GM12878 (cell line): ENCODE measurements at regions of chr17 and their contacts with region 1.

Region 1: GRCh38 chr17:7515911-7516610 is 31.9 kb downstream of the POLR2A start:
- DNase-seq: no peak
- ATAC-seq: no peak
- H3K4me3 ChIP-seq: no peak overlapping the region
- H3K27ac ChIP-seq: no peak overlapping the region
- H3K4me1 ChIP-seq: no peaks in the 10 kb centered on the region
- H3K27me3 ChIP-seq: no peaks in the 10 kb centered on the region
- CTCF ChIP-seq: no peak
- EP300 ChIP-seq: no peak
- POLR2A ChIP-seq: no peak
- RAD21 ChIP-seq: no peak

Region 2: DNA sequence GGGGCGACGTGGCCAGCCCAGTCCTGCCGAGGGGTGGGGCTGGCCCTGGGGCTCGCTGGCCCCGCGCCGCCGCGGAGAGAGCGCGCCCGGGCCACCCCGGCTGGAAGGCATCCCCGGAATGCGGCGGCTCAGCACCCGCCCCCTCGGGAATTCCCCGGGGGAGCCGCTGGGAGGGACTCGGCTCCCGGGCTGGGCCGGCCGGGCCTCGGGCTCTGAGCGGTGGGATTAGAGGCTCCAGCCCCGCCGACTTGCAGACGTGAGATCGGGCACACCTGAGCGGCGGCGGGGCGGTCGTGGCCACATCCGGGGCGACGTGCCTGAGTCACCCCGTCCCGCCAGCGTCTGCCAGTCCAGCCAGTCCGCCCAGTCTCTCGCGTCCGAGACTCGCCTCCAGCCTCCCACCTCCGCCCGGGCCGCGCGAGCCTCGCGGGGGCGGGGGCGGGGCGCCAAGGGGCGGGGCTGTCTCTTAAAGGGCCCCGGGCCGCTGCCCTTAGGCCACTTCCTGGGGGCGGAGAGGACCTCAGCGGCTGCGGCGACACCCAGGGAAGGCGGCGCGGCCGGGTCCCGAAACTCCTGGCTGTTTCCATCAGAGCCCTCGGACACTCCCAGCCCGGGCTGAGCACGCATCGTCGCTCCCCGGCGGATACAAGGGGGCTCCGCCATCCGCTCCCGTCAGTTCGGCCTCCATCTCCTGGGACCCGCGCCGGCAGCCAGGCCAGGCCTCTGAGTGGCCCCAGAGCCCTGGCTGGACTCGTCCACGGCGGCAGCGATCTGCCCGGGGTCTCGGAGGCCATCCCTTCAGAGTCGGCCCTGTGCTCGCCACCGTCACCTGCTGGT is 164.2 kb before region 1 on chr17 and contains the start of gene KCTD11:
- CTCF ChIA-PET with region 1: interaction called, 28 read pairs
- POLR2A ChIA-PET with region 1: no interaction called
- RAD21 ChIA-PET with region 1: interaction called, 4 read pairs
- SMC1A ChIA-PET with region 1: interaction called, 9 read pairs
- in situ Hi-C with region 1: no loop called
- intact Hi-C with region 1: no loop called
- DNase-seq: no peak
- ATAC-seq: peak; percentile 81
- H3K4me3 ChIP-seq: peak within 1 kb of the TSS; percentile 88
- H3K27ac ChIP-seq: peak within 1 kb of the TSS; percentile 59
- H3K4me1 ChIP-seq: peaks cover 23% of the 10 kb centered on the region
- H3K27me3 ChIP-seq: no peaks in the 10 kb centered on the region
- CTCF ChIP-seq: peak in 2 of 3 experiments; percentile 55 to 59; a peak in 3 of 6 replicates
- EP300 ChIP-seq: no peak
- POLR2A ChIP-seq: peak; percentile 81
- RAD21 ChIP-seq: 0 out of 2 replicates have a peak, but pooled peaks have one; percentile 27
- polyA plus RNA-seq, gene KCTD11: 0.05 to 0.09 TPM

Region 3: DNA sequence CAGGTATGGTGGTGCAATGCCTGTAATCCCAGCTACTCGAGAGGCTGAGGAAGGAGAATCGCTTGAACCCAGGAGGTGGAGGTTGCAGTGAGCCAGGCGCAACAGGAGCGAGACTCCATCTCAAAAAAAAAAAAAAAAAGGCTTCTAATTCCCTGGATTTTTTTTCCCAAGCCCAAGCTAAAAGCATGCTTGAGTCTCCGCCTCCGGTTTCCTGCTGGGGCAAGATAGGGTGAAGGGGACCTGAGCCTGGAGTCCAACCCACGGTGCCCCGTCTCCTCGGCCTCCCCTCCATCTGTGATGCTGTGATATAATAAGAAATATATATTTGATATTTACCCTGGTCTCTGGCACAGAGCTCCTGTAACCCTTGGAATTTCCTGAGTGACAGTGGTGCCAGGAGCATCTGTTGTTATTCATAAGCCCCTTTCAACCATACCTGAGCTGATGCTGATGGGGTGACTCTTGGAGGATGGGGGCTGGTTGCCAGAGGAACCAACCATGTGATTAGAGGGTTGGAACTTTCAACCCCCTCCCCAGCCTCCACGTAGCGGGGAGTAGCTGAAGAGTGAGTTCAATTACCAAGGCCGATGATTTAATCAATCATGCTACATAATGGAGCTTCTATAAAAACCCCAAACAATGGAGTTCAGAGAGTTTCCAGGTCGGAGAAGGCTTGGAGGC is 148.0 kb before region 1 on chr17:
- CTCF ChIA-PET with region 1: no interaction called
- POLR2A ChIA-PET with region 1: no interaction called
- RAD21 ChIA-PET with region 1: no interaction called
- SMC1A ChIA-PET with region 1: no interaction called
- in situ Hi-C with region 1: no loop called
- intact Hi-C with region 1: no loop called
- DNase-seq: no peak
- ATAC-seq: no peak
- H3K4me3 ChIP-seq: no peak overlapping the region
- H3K27ac ChIP-seq: no peak overlapping the region
- H3K4me1 ChIP-seq: no peaks in the 10 kb centered on the region
- H3K27me3 ChIP-seq: no peaks in the 10 kb centered on the region
- CTCF ChIP-seq: no peak
- EP300 ChIP-seq: no peak
- POLR2A ChIP-seq: no peak
- RAD21 ChIP-seq: no peak

Region 4: GRCh38 chr17:7398612-7399011 is 117.4 kb before region 1 on chr17:
- CTCF ChIA-PET with region 1: no interaction called
- POLR2A ChIA-PET with region 1: no interaction called
- RAD21 ChIA-PET with region 1: no interaction called
- SMC1A ChIA-PET with region 1: no interaction called
- in situ Hi-C with region 1: no loop called
- intact Hi-C with region 1: no loop called
- DNase-seq: no peak
- ATAC-seq: no peak
- H3K4me3 ChIP-seq: no peak overlapping the region
- H3K27ac ChIP-seq: no peak overlapping the region
- H3K4me1 ChIP-seq: peaks cover 3% of the 10 kb centered on the region; the same call in 1 of the 2 replicates
- H3K27me3 ChIP-seq: no peaks in the 10 kb centered on the region
- CTCF ChIP-seq: no peak
- EP300 ChIP-seq: no peak
- POLR2A ChIP-seq: no peak
- RAD21 ChIP-seq: no peak

Region 5: DNA sequence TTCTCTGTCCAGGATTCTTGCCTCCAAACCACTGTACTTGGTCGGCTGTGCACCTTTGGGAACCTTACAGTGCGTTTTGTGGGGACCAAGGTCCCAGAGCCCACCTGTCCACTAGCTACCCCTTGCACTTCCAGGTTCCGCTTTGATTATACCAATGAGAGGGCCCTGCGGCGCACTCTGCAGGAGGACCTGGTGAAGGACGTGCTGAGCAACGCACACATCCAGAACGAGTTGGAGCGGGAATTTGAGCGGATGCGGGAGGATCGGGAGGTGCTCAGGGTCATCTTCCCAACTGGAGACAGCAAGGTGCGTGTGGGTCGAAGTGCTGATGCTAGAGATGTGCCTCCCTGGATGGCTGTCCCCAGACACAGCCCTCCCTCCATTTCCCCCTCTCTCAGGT is 13.1 kb before region 1 on chr17:
- CTCF ChIA-PET with region 1: interaction called, 10 read pairs
- POLR2A ChIA-PET with region 1: interaction called, 3 read pairs
- RAD21 ChIA-PET with region 1: interaction called, 4 read pairs
- SMC1A ChIA-PET with region 1: interaction called, 3 read pairs
- in situ Hi-C with region 1: no loop called
- intact Hi-C with region 1: no loop called
- DNase-seq: no peak
- ATAC-seq: no peak
- H3K4me3 ChIP-seq: no peak overlapping the region
- H3K27ac ChIP-seq: no peak overlapping the region
- H3K4me1 ChIP-seq: no peaks in the 10 kb centered on the region
- H3K27me3 ChIP-seq: no peaks in the 10 kb centered on the region
- CTCF ChIP-seq: peak; percentile 17 to 31 (median 25); a peak in 4 of 6 replicates
- EP300 ChIP-seq: no peak
- POLR2A ChIP-seq: no peak
- RAD21 ChIP-seq: peak; percentile 47

Region 6: GRCh38 chr17:7528842-7529241 is 12.8 kb after region 1 on chr17:
- CTCF ChIA-PET with region 1: interaction called, 35 read pairs
- POLR2A ChIA-PET with region 1: interaction called, 5 read pairs
- RAD21 ChIA-PET with region 1: interaction called, 4 read pairs
- SMC1A ChIA-PET with region 1: interaction called, 9 read pairs
- in situ Hi-C with region 1: no loop called
- intact Hi-C with region 1: no loop called
- DNase-seq: no peak
- ATAC-seq: no peak
- H3K4me3 ChIP-seq: no peak overlapping the region
- H3K27ac ChIP-seq: no peak overlapping the region
- H3K4me1 ChIP-seq: no peaks in the 10 kb centered on the region
- H3K27me3 ChIP-seq: no peaks in the 10 kb centered on the region
- CTCF ChIP-seq: no peak
- EP300 ChIP-seq: no peak
- POLR2A ChIP-seq: no peak
- RAD21 ChIP-seq: no peak

Region 7: DNA sequence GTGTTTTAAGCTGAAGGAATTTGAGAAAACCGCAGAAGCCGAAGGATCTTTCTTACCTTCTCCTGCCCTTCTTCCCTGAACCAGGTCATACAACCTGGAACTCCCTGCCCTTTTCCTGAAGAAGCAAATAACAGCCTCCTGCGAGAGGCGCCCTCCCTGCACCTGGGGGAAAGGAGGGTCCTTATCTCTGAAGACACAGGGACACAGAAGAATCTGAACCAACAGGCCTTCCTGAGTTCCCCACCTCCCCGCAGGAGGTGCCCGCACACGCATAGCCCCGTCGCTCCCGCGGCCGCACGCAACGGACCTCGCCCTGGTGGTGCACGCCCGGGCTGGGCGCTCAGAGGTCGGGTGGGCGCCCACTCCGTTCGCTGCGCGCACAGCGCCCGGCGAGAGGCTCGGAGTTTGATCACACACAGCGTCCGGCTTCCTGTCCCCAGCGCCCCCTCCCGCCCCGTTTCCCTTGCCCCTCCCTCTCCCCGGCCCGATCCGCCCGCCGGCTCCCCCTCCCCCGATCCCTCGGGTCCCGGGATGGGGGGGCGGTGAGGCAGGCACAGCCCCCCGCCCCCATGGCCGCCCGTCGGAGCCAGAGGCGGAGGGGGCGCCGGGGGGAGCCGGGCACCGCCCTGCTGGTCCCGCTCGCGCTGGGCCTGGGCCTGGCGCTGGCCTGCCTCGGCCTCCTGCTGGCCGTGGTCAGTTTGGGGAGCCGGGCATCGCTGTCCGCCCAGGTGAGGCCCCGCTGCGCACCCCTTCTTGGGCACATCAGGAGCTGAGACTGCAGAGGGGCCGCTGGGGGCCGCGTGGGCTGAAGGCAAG is 32.7 kb after region 1 on chr17 and contains the start of gene TNFSF12:
- CTCF ChIA-PET with region 1: interaction called, 26 read pairs
- POLR2A ChIA-PET with region 1: interaction called, 5 read pairs
- RAD21 ChIA-PET with region 1: interaction called, 6 read pairs
- SMC1A ChIA-PET with region 1: interaction called, 10 read pairs
- in situ Hi-C with region 1: no loop called
- intact Hi-C with region 1: no loop called
- DNase-seq: no peak
- ATAC-seq: peak; percentile 73
- H3K4me3 ChIP-seq: peak within 1 kb of the TSS; percentile 70
- H3K27ac ChIP-seq: no peak within 1 kb of the TSS
- H3K4me1 ChIP-seq: peaks cover 28% of the 10 kb centered on the region
- H3K27me3 ChIP-seq: no peaks in the 10 kb centered on the region; a peak in 1 of 4 replicates
- CTCF ChIP-seq: peak in 1 of 3 experiments; percentile 9; a peak in 1 of 6 replicates
- EP300 ChIP-seq: no peak
- POLR2A ChIP-seq: peak; percentile 74
- RAD21 ChIP-seq: no peak
- polyA plus RNA-seq, gene TNFSF12: 0.32 to 0.53 TPM

Region 8: GRCh38 chr17:7589204-7589868 is 73.3 kb after region 1 on chr17:
- CTCF ChIA-PET with region 1: interaction called, 10 read pairs
- POLR2A ChIA-PET with region 1: no interaction called
- RAD21 ChIA-PET with region 1: no interaction called
- SMC1A ChIA-PET with region 1: interaction called, 3 read pairs
- in situ Hi-C with region 1: no loop called
- intact Hi-C with region 1: no loop called
- DNase-seq: no peak
- ATAC-seq: peak; percentile 86
- H3K4me3 ChIP-seq: no peak overlapping the region
- H3K27ac ChIP-seq: no peak overlapping the region
- H3K4me1 ChIP-seq: peaks cover 3% of the 10 kb centered on the region; the same call in 1 of the 2 replicates
- H3K27me3 ChIP-seq: no peaks in the 10 kb centered on the region
- CTCF ChIP-seq: peak; percentile 55 to 72 (median 65); a peak in 5 of 6 replicates
- EP300 ChIP-seq: no peak
- POLR2A ChIP-seq: no peak
- RAD21 ChIP-seq: peak; percentile 42